ENCODE measurements at regions of chr10 and their contacts with region 1.

Region 1: GRCh38 chr10:11165591-11166543 is 148.2 kb downstream of the CELF2 start:
- DNase-seq: peak; percentile 83
- H3K4me3 Mint-ChIP-seq: no peak overlapping the region
- H3K27ac Mint-ChIP-seq: peak overlapping the region; percentile 100
- H3K4me1 Mint-ChIP-seq: peaks cover 23% of the 10 kb centered on the region
- H3K27me3 Mint-ChIP-seq: no peaks in the 10 kb centered on the region

Region 2: DNA sequence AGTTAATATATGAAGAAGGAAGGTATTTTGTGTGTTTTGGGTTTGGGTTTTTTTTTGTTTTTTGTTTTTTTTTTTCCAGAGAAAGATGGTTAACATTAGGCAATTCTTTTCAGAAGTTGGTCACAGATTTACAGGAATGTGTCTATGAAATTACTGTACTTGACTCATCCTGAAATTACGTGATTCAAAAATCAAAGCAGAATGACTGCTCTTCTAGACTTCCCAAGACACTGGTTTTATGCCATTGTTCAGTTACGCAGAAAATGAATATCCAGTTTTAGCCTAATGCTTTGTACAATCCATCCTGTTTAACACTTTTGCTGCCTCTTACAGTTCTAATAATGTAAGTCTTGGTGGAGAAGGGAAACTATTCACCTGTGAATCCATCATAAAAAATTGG is 187.9 kb before region 1 on chr10:
- CTCF ChIA-PET with region 1: no interaction called
- POLR2A ChIA-PET with region 1: no interaction called
- intact Hi-C with region 1: loop called (anchors 5 kb)
- DNase-seq: no peak
- H3K4me3 Mint-ChIP-seq: no peak overlapping the region
- H3K27ac Mint-ChIP-seq: no peak overlapping the region
- H3K4me1 Mint-ChIP-seq: peaks cover 26% of the 10 kb centered on the region
- H3K27me3 Mint-ChIP-seq: peaks cover 28% of the 10 kb centered on the region

Region 3: DNA sequence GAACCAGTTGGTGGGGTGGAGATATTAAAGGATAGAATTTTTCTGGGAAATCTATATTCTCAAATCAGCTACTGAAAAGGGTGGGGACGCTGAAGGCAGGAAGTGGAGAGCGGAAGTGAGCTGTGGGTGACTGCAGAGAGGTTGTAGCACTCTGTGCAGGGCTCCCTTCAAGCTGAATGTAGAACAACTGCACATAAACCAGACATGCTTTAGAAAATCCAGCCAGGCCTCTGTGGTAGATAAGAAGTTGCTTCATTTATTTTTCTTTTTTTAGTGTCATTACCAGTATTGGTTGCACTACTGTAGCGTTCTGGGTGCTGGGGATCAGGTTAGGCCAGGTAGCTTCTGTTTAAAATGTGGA is 20.4 kb before region 1 on chr10:
- CTCF ChIA-PET with region 1: interaction called, 96 read pairs
- POLR2A ChIA-PET with region 1: interaction called, 170 read pairs
- intact Hi-C with region 1: loop called (anchors 1 kb)
- DNase-seq: peak; percentile 78
- H3K4me3 Mint-ChIP-seq: peak overlapping the region; percentile 64
- H3K27ac Mint-ChIP-seq: peak overlapping the region; percentile 93
- H3K4me1 Mint-ChIP-seq: peaks cover 86% of the 10 kb centered on the region
- H3K27me3 Mint-ChIP-seq: no peaks in the 10 kb centered on the region

Region 4: GRCh38 chr10:11197266-11197712 is 31.4 kb after region 1 on chr10:
- CTCF ChIA-PET with region 1: no interaction called
- POLR2A ChIA-PET with region 1: no interaction called
- intact Hi-C with region 1: no loop called
- DNase-seq: no peak
- H3K4me3 Mint-ChIP-seq: no peak overlapping the region
- H3K27ac Mint-ChIP-seq: peak overlapping the region; percentile 55
- H3K4me1 Mint-ChIP-seq: peaks cover 97% of the 10 kb centered on the region
- H3K27me3 Mint-ChIP-seq: no peaks in the 10 kb centered on the region

Region 5: GRCh38 chr10:11218395-11218794 is 52.5 kb after region 1 on chr10:
- CTCF ChIA-PET with region 1: no interaction called
- POLR2A ChIA-PET with region 1: interaction called, 12 read pairs
- intact Hi-C with region 1: no loop called
- DNase-seq: peak; percentile 67
- H3K4me3 Mint-ChIP-seq: peak overlapping the region; percentile 9
- H3K27ac Mint-ChIP-seq: peak overlapping the region; percentile 87
- H3K4me1 Mint-ChIP-seq: peaks cover 74% of the 10 kb centered on the region
- H3K27me3 Mint-ChIP-seq: no peaks in the 10 kb centered on the region

Region 6: DNA sequence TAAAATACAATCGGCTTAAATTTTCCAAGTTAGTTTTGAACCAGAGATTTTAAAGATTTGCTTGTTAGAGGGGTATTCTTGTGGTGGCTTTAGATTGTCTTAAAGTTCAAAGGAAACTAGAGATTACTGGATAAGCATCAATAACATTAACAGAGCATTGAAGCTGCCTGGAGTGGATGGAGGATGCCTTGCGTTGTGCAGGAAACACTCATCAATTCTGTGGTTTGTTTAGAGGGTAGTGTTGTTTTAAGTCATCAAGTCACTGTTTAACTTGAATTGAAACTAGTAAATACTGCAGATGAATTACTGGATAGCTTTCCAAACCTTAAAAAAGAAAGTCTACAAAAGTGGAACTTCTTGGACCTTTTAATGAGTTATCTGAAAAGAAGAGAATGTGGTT is 70.4 kb after region 1 on chr10:
- CTCF ChIA-PET with region 1: interaction called, 20 read pairs
- POLR2A ChIA-PET with region 1: interaction called, 52 read pairs
- intact Hi-C with region 1: loop called (anchors 1 kb)
- DNase-seq: peak; percentile 61
- H3K4me3 Mint-ChIP-seq: peak overlapping the region; percentile 66
- H3K27ac Mint-ChIP-seq: peak overlapping the region; percentile 93
- H3K4me1 Mint-ChIP-seq: peaks cover 97% of the 10 kb centered on the region
- H3K27me3 Mint-ChIP-seq: no peaks in the 10 kb centered on the region

Region 7: GRCh38 chr10:11358011-11358410 is 192.1 kb after region 1 on chr10:
- CTCF ChIA-PET with region 1: no interaction called
- POLR2A ChIA-PET with region 1: no interaction called
- intact Hi-C with region 1: no loop called
- DNase-seq: no peak
- H3K4me3 Mint-ChIP-seq: no peak overlapping the region
- H3K27ac Mint-ChIP-seq: no peak overlapping the region
- H3K4me1 Mint-ChIP-seq: peaks cover 7% of the 10 kb centered on the region
- H3K27me3 Mint-ChIP-seq: no peaks in the 10 kb centered on the region

Measured in activated CD4-positive, alpha-beta memory T cell treated with anti-CD3 and anti-CD28 coated beads for 36 hours (primary cell).